ENCODE measurements at regions of chr10 and their contacts with region 1.

Region 1: DNA sequence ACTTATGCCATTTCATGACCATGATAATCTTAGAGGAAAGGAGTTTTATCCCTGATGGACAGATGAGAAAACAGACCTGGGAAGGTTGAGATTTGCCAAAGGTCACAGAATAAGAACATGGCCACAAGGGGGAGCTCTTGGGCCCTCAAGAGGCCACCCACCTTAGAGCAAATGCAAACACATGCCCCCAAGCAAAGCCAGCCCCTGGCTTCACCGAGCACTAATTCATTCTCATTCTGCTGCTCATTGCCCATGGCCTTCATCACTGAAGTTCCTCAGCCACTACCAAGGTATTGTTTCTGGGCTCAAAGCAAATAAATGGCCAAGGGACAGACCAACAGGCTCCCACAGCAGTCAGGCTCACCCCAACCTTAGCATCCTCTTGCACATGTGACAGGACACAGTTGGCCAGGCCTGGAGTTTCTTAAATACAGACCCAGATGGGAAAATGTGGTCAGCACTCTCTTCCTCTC is 44.2 kb downstream of the PDLIM1 start:
- DNase-seq: peak; percentile 73
- H3K4me3 ChIP-seq: no peak overlapping the region
- H3K27ac ChIP-seq: no peak overlapping the region
- H3K4me1 ChIP-seq: no peaks in the 10 kb centered on the region
- H3K27me3 ChIP-seq: no peaks in the 10 kb centered on the region
- CTCF ChIP-seq: peak; percentile 68 to 87 (median 75)
- POLR2A ChIP-seq: no peak

Region 2: DNA sequence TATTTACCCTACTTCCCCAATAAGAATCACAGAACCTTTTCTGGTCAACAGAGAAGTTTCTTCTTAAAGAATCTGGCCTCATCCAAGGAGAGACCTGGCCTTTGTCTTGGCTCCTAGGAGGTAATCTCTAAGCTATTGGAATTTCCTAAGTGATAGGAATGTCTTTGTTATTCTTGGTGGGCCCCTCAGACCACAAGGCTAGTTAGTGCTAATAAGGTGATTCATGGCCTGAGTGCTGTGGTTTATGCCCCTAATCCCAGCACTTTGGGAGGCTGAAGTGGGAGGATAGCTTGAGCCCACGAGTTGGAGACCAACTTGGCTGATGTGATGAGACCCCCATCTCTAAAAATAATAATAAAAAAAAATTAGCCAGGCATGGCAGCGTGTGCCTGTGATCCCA is 623.0 kb before region 1 on chr10:
- intact Hi-C with region 1: loop called (anchors 10 kb)
- DNase-seq: no peak
- H3K4me3 ChIP-seq: no peak overlapping the region
- H3K27ac ChIP-seq: no peak overlapping the region
- H3K4me1 ChIP-seq: no peaks in the 10 kb centered on the region
- H3K27me3 ChIP-seq: no peaks in the 10 kb centered on the region
- CTCF ChIP-seq: no peak
- POLR2A ChIP-seq: no peak

Region 3: GRCh38 chr10:95183271-95184230 is 63.1 kb before region 1 on chr10:
- intact Hi-C with region 1: loop called (anchors 10 kb)
- DNase-seq: peak; percentile 74
- H3K4me3 ChIP-seq: peak overlapping the region; percentile 47 to 50
- H3K27ac ChIP-seq: peak overlapping the region; percentile 76 to 80
- H3K4me1 ChIP-seq: no peaks in the 10 kb centered on the region
- H3K27me3 ChIP-seq: no peaks in the 10 kb centered on the region
- CTCF ChIP-seq: peak; percentile 66 to 96 (median 91)
- POLR2A ChIP-seq: no peak

Region 4: DNA sequence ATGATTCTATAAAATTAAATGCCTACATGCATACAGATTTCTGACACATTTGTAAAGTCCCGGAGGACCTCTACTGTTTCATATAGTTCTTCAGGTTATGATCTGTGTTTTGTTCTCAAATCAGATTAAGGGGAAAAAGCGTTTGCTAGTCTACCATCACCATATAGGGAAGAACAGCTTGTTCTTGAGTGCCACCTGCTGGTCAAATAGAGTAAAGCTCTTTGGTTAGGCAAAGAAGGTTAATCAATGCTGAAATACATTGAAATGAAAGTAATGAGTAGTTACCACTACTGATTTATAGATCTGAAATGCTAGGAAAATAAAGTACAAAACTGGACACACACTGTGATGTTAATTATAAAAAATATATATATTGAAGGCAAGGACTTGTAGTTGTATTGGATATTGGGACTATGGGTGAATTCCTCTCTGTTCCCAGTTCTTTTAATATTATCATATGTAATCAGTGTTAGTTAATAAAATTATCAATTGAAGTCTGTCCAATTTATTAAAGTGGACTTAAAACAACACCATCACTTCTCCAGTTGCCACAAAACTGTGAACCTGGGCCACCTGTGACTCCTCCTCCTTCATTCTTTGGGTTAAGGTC is 116.8 kb after region 1 on chr10:
- intact Hi-C with region 1: loop called (anchors 5 kb)
- DNase-seq: peak; percentile 49
- H3K4me3 ChIP-seq: no peak overlapping the region
- H3K27ac ChIP-seq: no peak overlapping the region
- H3K4me1 ChIP-seq: no peaks in the 10 kb centered on the region
- H3K27me3 ChIP-seq: no peaks in the 10 kb centered on the region
- CTCF ChIP-seq: peak; percentile 77 to 96 (median 91)
- POLR2A ChIP-seq: no peak

Region 5: GRCh38 chr10:95373660-95374059 is 127.0 kb after region 1 on chr10:
- intact Hi-C with region 1: no loop called
- DNase-seq: no peak
- H3K4me3 ChIP-seq: no peak overlapping the region
- H3K27ac ChIP-seq: no peak overlapping the region
- H3K4me1 ChIP-seq: no peaks in the 10 kb centered on the region
- H3K27me3 ChIP-seq: no peaks in the 10 kb centered on the region
- CTCF ChIP-seq: no peak
- POLR2A ChIP-seq: no peak

Region 6: DNA sequence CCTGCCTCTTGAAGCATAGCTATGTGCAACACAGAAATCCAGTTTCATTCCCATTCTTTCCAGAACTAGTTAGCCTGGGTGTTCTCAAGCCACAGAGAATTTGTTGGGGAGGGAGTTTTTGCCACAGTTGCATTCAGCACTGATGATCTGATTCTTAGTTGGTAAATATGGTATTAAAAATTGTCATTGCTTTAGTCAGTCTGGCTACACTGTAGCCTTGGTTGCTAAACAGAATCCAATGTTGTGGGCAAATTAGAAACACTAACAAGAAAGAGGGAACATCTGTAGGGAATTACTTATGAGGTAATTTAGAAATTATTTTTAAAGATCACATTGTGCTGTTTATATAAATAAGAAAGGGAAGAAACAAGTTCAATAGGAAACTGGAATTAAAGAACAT is 604.2 kb after region 1 on chr10:
- intact Hi-C with region 1: no loop called
- DNase-seq: no peak
- H3K4me3 ChIP-seq: no peak overlapping the region
- H3K27ac ChIP-seq: no peak overlapping the region
- H3K4me1 ChIP-seq: no peaks in the 10 kb centered on the region
- H3K27me3 ChIP-seq: no peaks in the 10 kb centered on the region
- CTCF ChIP-seq: no peak
- POLR2A ChIP-seq: no peak

Measured in prostate gland (tissue), 2 donors.